K562 (cell line): ENCODE measurements at regions of chr6 and their contacts with region 1.

Region 1: GRCh38 chr6:166775180-166776081 is 148.4 kb upstream of the RPS6KA2 start:
- DNase-seq: peak; percentile 79 to 87 (median 81)
- ATAC-seq: peak; percentile 93
- H3K4me3 ChIP-seq: no peak overlapping the region
- H3K27ac ChIP-seq: no peak overlapping the region
- H3K4me1 ChIP-seq: peaks cover 0 to 9% of the 10 kb centered on the region in 2 experiments; a peak in 2 of 5 replicates
- H3K27me3 ChIP-seq: peaks cover 33 to 80% of the 10 kb centered on the region in 2 experiments
- CTCF ChIP-seq: peak; percentile 82 to 96 (median 91)
- EP300 ChIP-seq: no peak
- POLR2A ChIP-seq: no peak
- RAD21 ChIP-seq: peak; percentile 91

Region 2: GRCh38 chr6:166561771-166562359 is 213.6 kb before region 1 on chr6:
- CTCF ChIA-PET with region 1: no interaction called
- POLR2A ChIA-PET with region 1: no interaction called
- in situ Hi-C with region 1: no loop called
- intact Hi-C with region 1: no loop called
- DNase-seq: no peak
- ATAC-seq: no peak
- H3K4me3 ChIP-seq: no peak overlapping the region
- H3K27ac ChIP-seq: no peak overlapping the region
- H3K4me1 ChIP-seq: peaks cover 0 to 3% of the 10 kb centered on the region in 2 experiments; a peak in 1 of 5 replicates
- H3K27me3 ChIP-seq: peaks cover 47 to 76% of the 10 kb centered on the region in 2 experiments
- CTCF ChIP-seq: no peak
- EP300 ChIP-seq: no peak
- POLR2A ChIP-seq: no peak
- RAD21 ChIP-seq: no peak

Region 3: DNA sequence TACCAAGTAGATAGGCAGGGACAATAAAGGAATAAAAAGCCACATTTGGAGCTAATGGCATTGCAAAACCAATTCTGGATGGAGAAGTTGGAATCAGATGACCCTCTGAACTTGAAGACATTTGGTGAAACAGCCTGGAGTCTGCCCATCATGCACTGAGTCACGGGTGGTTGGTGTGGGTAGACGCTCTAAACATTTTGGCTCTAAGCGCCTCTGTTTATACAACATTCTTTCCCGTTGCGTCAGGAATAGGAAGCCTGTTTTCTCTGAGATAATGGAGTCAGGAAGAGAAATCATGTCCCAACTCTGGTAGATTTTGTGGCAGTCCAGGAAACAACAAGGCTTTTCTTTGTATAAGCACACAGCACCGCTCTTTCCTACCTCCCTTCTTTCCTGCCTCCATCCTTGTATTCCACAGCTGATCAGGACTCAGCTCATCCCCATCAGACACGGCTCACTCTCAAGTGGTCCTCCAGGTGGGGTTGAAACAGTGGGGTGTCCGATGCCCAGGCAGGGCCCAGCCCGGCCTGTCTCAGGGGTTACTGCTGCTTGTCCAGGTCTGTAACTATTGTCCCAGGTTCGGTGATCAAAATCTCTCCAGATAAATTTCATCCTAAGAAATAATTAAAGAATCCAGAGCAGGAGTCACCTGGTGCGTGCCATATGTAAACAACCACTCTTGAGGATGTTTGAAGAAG is 176.8 kb before region 1 on chr6:
- CTCF ChIA-PET with region 1: no interaction called
- POLR2A ChIA-PET with region 1: no interaction called
- in situ Hi-C with region 1: no loop called
- intact Hi-C with region 1: no loop called
- DNase-seq: no peak
- ATAC-seq: no peak
- H3K4me3 ChIP-seq: no peak overlapping the region
- H3K27ac ChIP-seq: no peak overlapping the region
- H3K4me1 ChIP-seq: no peaks in the 10 kb centered on the region
- H3K27me3 ChIP-seq: peaks cover 10 to 33% of the 10 kb centered on the region in 2 experiments
- CTCF ChIP-seq: no peak
- EP300 ChIP-seq: no peak
- POLR2A ChIP-seq: no peak
- RAD21 ChIP-seq: no peak

Region 4: GRCh38 chr6:166956444-166957086 is 181.1 kb after region 1 on chr6 and contains the start of gene RNASET2:
- CTCF ChIA-PET with region 1: no interaction called
- POLR2A ChIA-PET with region 1: no interaction called
- in situ Hi-C with region 1: loop called (anchors 10 kb)
- intact Hi-C with region 1: no loop called
- DNase-seq: peak; percentile 96 to 99 (median 97)
- ATAC-seq: peak; percentile 97
- H3K4me3 ChIP-seq: peak within 1 kb of the TSS; percentile 75
- H3K27ac ChIP-seq: peak within 1 kb of the TSS; percentile 73
- H3K4me1 ChIP-seq: peaks cover 27 to 41% of the 10 kb centered on the region in 2 experiments
- H3K27me3 ChIP-seq: no peaks in the 10 kb centered on the region
- CTCF ChIP-seq: 0 out of 6 replicates have a peak, but pooled peaks of 1 of the 3 experiments have one; percentile 4
- EP300 ChIP-seq: no peak
- POLR2A ChIP-seq: peak; percentile 63
- RAD21 ChIP-seq: no peak
- polyA plus RNA-seq, gene RNASET2: 7.4 to 15.8 TPM

Region 5: GRCh38 chr6:166989427-166990032 is 214.1 kb after region 1 on chr6:
- CTCF ChIA-PET with region 1: interaction called, 9 read pairs
- POLR2A ChIA-PET with region 1: no interaction called
- in situ Hi-C with region 1: no loop called
- intact Hi-C with region 1: loop called (anchors 5 kb)
- DNase-seq: peak in 2 of 4 experiments; percentile 26 to 45
- ATAC-seq: peak; percentile 83
- H3K4me3 ChIP-seq: no peak overlapping the region
- H3K27ac ChIP-seq: no peak overlapping the region
- H3K4me1 ChIP-seq: no peaks in the 10 kb centered on the region
- H3K27me3 ChIP-seq: no peaks in the 10 kb centered on the region
- CTCF ChIP-seq: peak; percentile 53 to 75 (median 61); a peak in 3 of 6 replicates
- EP300 ChIP-seq: no peak
- POLR2A ChIP-seq: no peak
- RAD21 ChIP-seq: peak; percentile 55 to 74

Region 6: DNA sequence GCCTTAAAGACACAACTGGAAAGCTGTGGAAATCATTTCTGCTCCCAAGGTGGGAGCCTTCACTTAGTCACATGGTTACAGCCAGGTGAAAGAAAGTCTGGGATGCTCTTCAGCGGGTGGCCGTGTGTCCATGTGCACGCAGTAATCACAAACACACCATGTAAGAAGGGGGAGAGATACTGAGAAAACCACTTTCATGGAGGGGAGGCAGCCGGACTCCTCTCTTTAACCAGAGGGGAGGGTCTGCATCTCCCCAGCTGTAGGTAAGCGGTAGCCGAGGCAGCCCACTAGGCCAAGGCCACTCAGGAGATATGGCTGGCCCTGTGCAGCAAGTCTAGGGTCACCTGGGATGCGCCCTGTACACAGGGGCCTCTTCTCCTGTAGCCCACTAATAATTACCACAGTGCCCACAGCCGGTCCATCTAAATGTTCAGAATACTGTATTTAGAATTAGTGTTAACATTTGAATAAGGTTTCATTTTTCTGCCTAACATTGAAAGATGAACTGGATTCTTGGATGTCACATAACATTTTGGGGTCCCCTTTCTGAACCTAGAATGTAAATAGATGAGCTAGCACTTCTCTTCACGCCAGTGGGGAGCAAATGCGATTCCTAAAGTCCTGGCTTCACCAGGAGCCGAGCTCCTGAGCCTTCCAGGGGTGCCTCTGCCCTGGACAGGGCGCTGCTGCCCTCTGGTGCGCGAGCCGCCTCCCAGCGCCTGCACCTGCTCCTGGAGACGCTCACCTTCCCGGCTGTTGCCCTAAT is 366.4 kb after region 1 on chr6:
- CTCF ChIA-PET with region 1: interaction called, 20 read pairs
- POLR2A ChIA-PET with region 1: no interaction called
- in situ Hi-C with region 1: loop called (anchors 5 kb)
- intact Hi-C with region 1: loop called (anchors 1 kb)
- DNase-seq: peak; percentile 32 to 60 (median 44)
- ATAC-seq: peak; percentile 96
- H3K4me3 ChIP-seq: no peak overlapping the region
- H3K27ac ChIP-seq: no peak overlapping the region
- H3K4me1 ChIP-seq: no peaks in the 10 kb centered on the region
- H3K27me3 ChIP-seq: peaks cover 28 to 64% of the 10 kb centered on the region in 2 experiments
- CTCF ChIP-seq: peak; percentile 84 to 89 (median 85)
- EP300 ChIP-seq: no peak
- POLR2A ChIP-seq: no peak
- RAD21 ChIP-seq: peak; percentile 86 to 95

Region 7: GRCh38 chr6:167285077-167285770 is 509.8 kb after region 1 on chr6:
- CTCF ChIA-PET with region 1: no interaction called
- POLR2A ChIA-PET with region 1: no interaction called
- in situ Hi-C with region 1: loop called (anchors 25 kb)
- intact Hi-C with region 1: loop called (anchors 10 kb)
- DNase-seq: no peak
- ATAC-seq: no peak
- H3K4me3 ChIP-seq: no peak overlapping the region
- H3K27ac ChIP-seq: no peak overlapping the region
- H3K4me1 ChIP-seq: no peaks in the 10 kb centered on the region
- H3K27me3 ChIP-seq: peaks cover 11 to 39% of the 10 kb centered on the region in 2 experiments; a peak in 4 of 5 replicates
- CTCF ChIP-seq: no peak
- EP300 ChIP-seq: no peak
- POLR2A ChIP-seq: no peak
- RAD21 ChIP-seq: no peak

Region 8: DNA sequence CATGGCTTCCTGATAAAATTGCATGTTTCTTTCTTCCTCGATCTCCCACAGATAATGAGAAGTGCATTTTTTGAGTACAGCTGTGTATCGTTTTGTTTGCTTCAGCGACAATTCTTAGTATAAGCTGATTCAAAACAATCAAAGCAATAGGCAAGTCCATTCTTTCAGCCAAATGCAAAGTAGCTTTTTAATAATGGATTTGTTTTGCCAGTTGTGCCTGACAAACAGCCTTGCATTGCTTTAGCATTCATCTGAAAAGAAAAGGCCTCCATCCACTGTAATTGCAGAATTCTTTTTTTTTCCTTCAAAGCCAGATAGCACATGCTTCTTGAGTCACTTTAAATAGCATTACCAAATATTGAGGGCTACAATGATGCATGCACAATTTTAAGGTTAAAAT is 581.4 kb after region 1 on chr6:
- CTCF ChIA-PET with region 1: no interaction called
- POLR2A ChIA-PET with region 1: no interaction called
- in situ Hi-C with region 1: loop called (anchors 10 kb)
- intact Hi-C with region 1: no loop called
- DNase-seq: no peak
- ATAC-seq: no peak
- H3K4me3 ChIP-seq: no peak overlapping the region
- H3K27ac ChIP-seq: no peak overlapping the region
- H3K4me1 ChIP-seq: no peaks in the 10 kb centered on the region
- H3K27me3 ChIP-seq: peaks cover 6 to 18% of the 10 kb centered on the region in 2 experiments; a peak in 3 of 5 replicates
- CTCF ChIP-seq: no peak
- EP300 ChIP-seq: no peak
- POLR2A ChIP-seq: no peak
- RAD21 ChIP-seq: no peak